Activated CD4-positive, alpha-beta memory T cell treated with anti-CD3 and anti-CD28 coated beads for 36 hours (primary cell): ENCODE measurements at regions of chr13 and their contacts with region 1.

Region 1: DNA sequence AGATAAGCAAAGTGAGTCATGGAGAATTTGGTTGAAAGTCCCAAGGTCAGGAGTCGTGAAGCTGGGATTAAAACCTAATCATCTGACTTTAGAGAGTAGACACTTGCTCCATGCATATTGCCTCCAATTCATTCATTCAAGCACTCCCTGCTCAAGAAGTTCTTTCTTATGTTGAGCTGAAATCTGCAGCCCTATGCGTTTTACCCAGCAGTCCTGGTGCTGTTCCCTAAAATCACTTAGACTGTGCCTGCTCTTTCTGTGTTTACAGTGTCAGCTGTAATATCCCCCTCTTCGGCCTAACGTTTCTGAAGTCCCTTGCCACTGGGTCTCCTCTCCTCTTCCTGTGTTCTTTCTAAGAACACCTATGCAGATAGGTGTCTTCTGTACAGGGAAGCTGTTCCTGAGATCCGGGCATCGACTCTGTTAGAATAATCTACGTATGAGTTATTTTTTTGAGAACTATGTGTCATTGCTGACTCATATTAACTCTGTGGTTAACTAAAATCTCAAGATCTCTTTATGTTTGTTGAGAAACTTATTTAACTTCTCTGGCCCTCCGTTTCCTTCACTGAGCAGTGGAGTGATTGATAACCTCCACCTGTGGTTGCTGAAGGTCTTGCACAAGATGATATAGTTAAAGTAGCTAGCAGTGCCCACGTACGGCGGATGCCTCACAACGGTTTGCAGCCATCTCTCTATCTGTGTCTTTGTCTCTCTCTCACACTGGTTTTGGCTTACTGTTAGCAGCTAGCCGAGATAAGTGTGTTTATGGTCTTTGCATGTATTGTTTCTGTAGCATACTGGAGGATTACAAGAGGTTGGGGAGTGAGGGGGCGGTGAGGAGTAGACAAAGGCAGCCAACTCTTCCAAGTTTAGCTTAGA is 4.7 kb downstream of the ALOX5AP start:
- DNase-seq: peak; percentile 83
- H3K4me3 Mint-ChIP-seq: peak overlapping the region; percentile 69
- H3K27ac Mint-ChIP-seq: peak overlapping the region; percentile 87
- H3K4me1 Mint-ChIP-seq: peaks cover 76% of the 10 kb centered on the region
- H3K27me3 Mint-ChIP-seq: peaks cover 2% of the 10 kb centered on the region

Region 2: GRCh38 chr13:30371649-30372265 is 368.2 kb before region 1 on chr13:
- CTCF ChIA-PET with region 1: interaction called, 4 read pairs
- POLR2A ChIA-PET with region 1: no interaction called
- intact Hi-C with region 1: loop called (anchors 2 kb)
- DNase-seq: peak; percentile 84
- H3K4me3 Mint-ChIP-seq: peak overlapping the region; percentile 55
- H3K27ac Mint-ChIP-seq: peak overlapping the region; percentile 82
- H3K4me1 Mint-ChIP-seq: peaks cover 79% of the 10 kb centered on the region
- H3K27me3 Mint-ChIP-seq: no peaks in the 10 kb centered on the region

Region 3: GRCh38 chr13:30654430-30654829 is 85.6 kb before region 1 on chr13:
- CTCF ChIA-PET with region 1: no interaction called
- POLR2A ChIA-PET with region 1: no interaction called
- intact Hi-C with region 1: loop called (anchors 1 kb)
- DNase-seq: peak; percentile 43
- H3K4me3 Mint-ChIP-seq: no peak overlapping the region
- H3K27ac Mint-ChIP-seq: peak overlapping the region; percentile 42
- H3K4me1 Mint-ChIP-seq: peaks cover 33% of the 10 kb centered on the region
- H3K27me3 Mint-ChIP-seq: no peaks in the 10 kb centered on the region

Region 4: DNA sequence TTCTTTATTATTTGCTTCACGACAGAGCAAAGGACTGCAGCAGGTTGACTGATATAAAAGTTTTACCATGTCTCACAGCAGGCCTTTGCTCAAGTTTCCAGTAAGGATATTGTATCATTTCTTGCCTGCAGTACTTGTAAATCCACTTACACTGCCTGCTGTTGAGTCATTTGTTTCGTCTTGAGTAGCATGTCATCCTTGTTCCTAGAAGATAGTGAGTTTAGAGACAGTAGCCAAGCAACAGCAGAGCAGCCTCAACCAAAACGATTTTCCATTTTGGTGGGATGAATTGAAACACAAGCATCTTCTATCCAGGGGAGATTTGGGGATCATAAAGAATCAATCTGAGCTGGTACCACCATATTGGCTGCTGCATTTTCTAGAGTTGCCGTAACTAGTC is 28.6 kb before region 1 on chr13:
- CTCF ChIA-PET with region 1: no interaction called
- POLR2A ChIA-PET with region 1: interaction called, 3 read pairs
- intact Hi-C with region 1: loop called (anchors 1 kb)
- DNase-seq: peak; percentile 26
- H3K4me3 Mint-ChIP-seq: no peak overlapping the region
- H3K27ac Mint-ChIP-seq: no peak overlapping the region
- H3K4me1 Mint-ChIP-seq: peaks cover 15% of the 10 kb centered on the region
- H3K27me3 Mint-ChIP-seq: peaks cover 4% of the 10 kb centered on the region

Region 5: DNA sequence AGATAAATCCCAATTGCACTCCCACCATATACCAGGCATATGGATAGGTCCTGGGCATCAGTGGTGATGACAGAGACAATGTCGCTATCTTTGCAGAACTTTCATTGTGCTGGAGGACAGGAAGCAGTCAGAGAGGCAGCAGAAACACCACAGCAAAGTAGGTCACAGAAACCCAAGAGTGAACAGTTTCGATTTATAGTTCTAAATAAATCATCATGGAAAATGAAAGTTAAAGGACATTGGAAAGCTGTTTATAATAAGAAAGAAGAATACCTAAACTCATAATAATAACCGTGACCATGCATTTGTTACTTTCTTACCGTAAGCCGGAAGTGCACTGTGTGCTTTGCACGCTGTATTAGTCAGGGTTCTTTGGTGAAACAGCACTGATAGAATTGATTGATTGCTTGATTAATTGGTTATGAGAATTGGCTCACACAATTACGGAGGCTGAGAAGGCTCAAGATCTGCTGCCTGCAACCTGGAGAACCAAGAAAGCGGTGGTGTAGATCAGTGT is 34.3 kb after region 1 on chr13:
- CTCF ChIA-PET with region 1: interaction called, 3 read pairs
- POLR2A ChIA-PET with region 1: interaction called, 10 read pairs
- intact Hi-C with region 1: loop called (anchors 1 kb)
- DNase-seq: peak; percentile 56
- H3K4me3 Mint-ChIP-seq: peak overlapping the region; percentile 0
- H3K27ac Mint-ChIP-seq: peak overlapping the region; percentile 53
- H3K4me1 Mint-ChIP-seq: peaks cover 24% of the 10 kb centered on the region
- H3K27me3 Mint-ChIP-seq: no peaks in the 10 kb centered on the region

Region 6: GRCh38 chr13:30847650-30848307 is 107.8 kb after region 1 on chr13:
- CTCF ChIA-PET with region 1: no interaction called
- POLR2A ChIA-PET with region 1: no interaction called
- intact Hi-C with region 1: loop called (anchors 1 kb)
- DNase-seq: peak; percentile 64
- H3K4me3 Mint-ChIP-seq: no peak overlapping the region
- H3K27ac Mint-ChIP-seq: peak overlapping the region; percentile 39
- H3K4me1 Mint-ChIP-seq: peaks cover 23% of the 10 kb centered on the region
- H3K27me3 Mint-ChIP-seq: peaks cover 9% of the 10 kb centered on the region